Left ventricle myocardium superior (tissue), 1 donor: ENCODE measurements at regions of chr9 and their contacts with region 1.

Region 1: DNA sequence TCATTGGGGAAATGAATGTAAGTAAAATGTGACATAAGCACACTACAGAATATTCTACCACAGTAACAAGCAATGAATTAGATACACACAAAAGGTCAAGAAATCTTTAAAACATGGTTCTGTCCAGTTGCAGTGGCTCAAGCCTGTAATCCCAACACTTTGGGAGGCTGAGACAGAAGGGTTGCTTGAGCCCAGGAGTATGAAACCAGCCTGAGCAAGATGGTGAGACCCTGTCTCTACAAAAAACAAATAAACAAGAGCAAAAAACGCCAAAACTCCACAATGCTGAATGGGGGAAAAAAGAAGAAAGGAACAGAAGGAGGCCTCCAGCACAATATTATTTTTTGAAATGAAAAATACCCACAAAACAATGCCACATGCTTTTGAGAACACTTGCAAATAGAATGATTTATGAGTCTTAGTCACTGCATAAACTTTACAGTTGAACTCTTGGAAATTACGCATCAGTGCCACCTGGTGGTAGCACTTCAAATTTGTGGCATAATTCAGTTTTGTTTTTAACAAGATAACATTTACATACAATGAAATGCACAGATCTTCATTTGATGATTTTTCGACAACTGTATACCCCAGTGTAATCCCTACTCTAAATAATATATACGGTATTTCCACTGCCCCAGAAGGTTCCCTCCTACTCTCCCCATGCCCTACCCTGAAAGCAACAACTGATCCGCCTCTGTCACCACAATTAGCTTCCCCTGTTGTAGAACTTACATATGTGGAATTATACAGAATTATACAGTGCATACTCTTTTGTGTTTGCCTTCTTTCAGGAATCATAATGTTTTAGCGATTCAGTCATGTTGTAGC is 14.4 kb upstream of the SPINK4 start:
- DNase-seq: no peak
- ATAC-seq: peak; percentile 52

Region 2: DNA sequence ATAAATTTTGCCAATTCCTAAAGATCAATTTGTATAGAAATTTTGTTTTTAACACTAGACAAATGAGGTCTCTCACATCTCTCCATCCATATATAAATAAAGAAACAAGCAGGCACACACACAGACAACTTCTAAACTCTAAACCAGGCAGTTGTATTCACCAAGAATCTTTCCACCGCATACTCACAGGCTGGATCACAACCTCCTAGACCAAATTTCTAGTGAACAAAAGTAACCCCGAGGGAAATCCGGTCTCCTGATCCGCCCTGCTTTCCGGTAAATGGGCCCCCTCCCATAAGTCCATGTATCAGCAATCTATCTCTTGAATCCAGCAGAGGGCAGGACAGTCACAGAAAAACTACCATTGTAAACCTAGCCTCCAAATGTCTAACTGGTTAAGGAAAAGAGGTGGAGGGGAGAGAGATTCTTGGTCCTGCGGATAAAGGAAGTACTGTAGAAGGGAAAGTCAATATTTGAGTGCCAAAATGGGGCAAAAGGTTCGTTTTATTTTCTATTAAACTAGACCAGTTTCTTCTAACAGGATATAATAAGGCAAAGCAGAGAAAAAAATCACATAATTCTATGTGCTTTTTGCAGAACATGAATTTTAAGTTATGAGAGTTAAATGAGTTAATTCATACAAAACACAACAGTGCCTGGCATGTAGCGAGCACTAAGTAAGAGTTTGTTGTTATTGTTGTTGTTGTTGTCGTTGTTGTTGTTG is 144.2 kb before region 1 on chr9:
- intact Hi-C with region 1: loop called (anchors 1 kb)
- DNase-seq: no peak
- ATAC-seq: peak; percentile 59

Region 3: GRCh38 chr9:33167046-33167808 is 58.3 kb before region 1 on chr9 and contains the start of gene B4GALT1:
- intact Hi-C with region 1: loop called (anchors 10 kb)
- DNase-seq: peak; percentile 98
- ATAC-seq: peak; percentile 77
- total RNA-seq, gene B4GALT1: 42.5 TPM

Region 4: DNA sequence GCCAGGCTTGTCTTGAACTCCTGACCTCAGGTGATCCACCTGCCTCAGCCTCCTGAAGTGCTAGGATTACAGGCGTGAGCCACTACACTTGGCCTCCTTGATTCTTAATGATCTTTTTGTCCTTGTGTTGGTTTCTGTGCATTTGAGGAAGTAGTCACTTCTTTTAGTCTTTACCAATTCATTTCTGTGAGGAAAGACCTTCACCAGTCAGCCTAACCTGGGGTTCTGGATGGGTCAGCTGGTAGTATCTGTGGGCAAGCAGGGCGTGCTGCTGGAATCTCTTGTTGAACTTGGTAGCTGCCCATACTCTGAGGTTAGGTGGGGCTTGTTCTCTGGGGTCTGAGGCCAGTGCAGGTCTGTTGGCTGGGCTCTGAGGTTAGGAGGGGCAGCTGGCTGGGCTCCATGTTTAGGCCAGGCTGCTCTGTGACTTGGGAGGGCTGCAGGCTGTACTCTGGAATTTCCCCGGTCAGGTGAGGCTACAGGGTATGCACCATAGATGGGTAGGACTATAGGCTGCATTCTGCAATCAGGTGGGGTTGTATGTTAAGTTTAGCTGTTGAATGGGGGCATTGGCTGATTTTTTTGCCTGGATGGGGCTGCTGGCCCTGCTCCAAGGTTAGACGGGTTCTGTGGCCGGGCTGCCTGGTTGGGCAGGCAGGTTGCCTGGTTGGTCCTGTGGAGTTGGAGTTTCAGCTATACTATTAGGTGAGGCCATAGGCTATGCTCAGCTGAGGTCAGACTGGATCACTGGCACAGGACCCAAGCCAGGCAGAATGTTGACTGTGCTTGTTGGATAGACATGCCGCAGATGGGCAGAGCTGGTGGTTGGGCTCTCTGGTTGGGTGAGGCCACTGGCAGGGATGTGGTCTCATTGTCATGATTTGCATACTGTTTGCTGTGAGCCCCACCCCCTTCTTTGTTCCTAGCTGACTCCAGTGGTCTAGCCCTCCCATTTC is 972.5 kb after region 1 on chr9:
- intact Hi-C with region 1: no loop called
- DNase-seq: no peak
- ATAC-seq: peak; percentile 54